HepG2 (cell line): ENCODE measurements at regions of chr5 and their contacts with region 1.

Region 1: GRCh38 chr5:134018154-134018985 is 13.6 kb upstream of the VDAC1 start:
- DNase-seq: peak; percentile 91
- ATAC-seq: peak; percentile 72
- H3K4me3 ChIP-seq: peak overlapping the region; percentile 24 to 60 (median 58)
- H3K27ac ChIP-seq: peak overlapping the region; percentile 93
- H3K4me1 ChIP-seq: peaks cover 60% of the 10 kb centered on the region
- H3K27me3 ChIP-seq: no peaks in the 10 kb centered on the region
- CTCF ChIP-seq: 0 out of 2 replicates have a peak, but pooled peaks have one; percentile 22
- EP300 ChIP-seq: peak; percentile 48 to 64; a peak in 2 of 4 replicates
- POLR2A ChIP-seq: peak in 1 of 2 experiments; percentile 67
- RAD21 ChIP-seq: no peak

Region 2: GRCh38 chr5:133968049-133968980 is 50.1 kb before region 1 on chr5 and contains the start of gene C5orf15:
- CTCF ChIA-PET with region 1: no interaction called
- POLR2A ChIA-PET with region 1: interaction called, 30 read pairs
- in situ Hi-C with region 1: no loop called
- intact Hi-C with region 1: no loop called
- DNase-seq: peak; percentile 95
- ATAC-seq: peak; percentile 94
- H3K4me3 ChIP-seq: peak within 1 kb of the TSS; percentile 80 to 98 (median 93)
- H3K27ac ChIP-seq: peak within 1 kb of the TSS; percentile 93
- H3K4me1 ChIP-seq: peaks cover 51% of the 10 kb centered on the region
- H3K27me3 ChIP-seq: no peaks in the 10 kb centered on the region; a peak in 1 of 5 replicates
- CTCF ChIP-seq: peak; percentile 36; the same call in 1 of the 2 replicates
- EP300 ChIP-seq: 0 out of 4 replicates have a peak, but pooled peaks of 1 of the 2 experiments have one; percentile 14
- POLR2A ChIP-seq: peak; percentile 89 to 93
- RAD21 ChIP-seq: peak; percentile 46; the same call in 1 of the 2 replicates
- total RNA-seq, gene C5orf15: 35.7 and 58.5 TPM in 2 replicates

Region 3: GRCh38 chr5:133996683-133997252 is 21.6 kb before region 1 on chr5:
- CTCF ChIA-PET with region 1: no interaction called
- POLR2A ChIA-PET with region 1: interaction called, 58 read pairs
- in situ Hi-C with region 1: no loop called
- intact Hi-C with region 1: no loop called
- DNase-seq: no peak
- ATAC-seq: peak; percentile 18
- H3K4me3 ChIP-seq: 0 out of 6 replicates have a peak overlapping the region, but pooled peaks of 1 of the 3 experiments have one; percentile 53
- H3K27ac ChIP-seq: peak overlapping the region; percentile 16
- H3K4me1 ChIP-seq: peaks cover 93% of the 10 kb centered on the region
- H3K27me3 ChIP-seq: no peaks in the 10 kb centered on the region
- CTCF ChIP-seq: peak; percentile 73
- EP300 ChIP-seq: no peak
- POLR2A ChIP-seq: no peak
- RAD21 ChIP-seq: no peak

Region 4: DNA sequence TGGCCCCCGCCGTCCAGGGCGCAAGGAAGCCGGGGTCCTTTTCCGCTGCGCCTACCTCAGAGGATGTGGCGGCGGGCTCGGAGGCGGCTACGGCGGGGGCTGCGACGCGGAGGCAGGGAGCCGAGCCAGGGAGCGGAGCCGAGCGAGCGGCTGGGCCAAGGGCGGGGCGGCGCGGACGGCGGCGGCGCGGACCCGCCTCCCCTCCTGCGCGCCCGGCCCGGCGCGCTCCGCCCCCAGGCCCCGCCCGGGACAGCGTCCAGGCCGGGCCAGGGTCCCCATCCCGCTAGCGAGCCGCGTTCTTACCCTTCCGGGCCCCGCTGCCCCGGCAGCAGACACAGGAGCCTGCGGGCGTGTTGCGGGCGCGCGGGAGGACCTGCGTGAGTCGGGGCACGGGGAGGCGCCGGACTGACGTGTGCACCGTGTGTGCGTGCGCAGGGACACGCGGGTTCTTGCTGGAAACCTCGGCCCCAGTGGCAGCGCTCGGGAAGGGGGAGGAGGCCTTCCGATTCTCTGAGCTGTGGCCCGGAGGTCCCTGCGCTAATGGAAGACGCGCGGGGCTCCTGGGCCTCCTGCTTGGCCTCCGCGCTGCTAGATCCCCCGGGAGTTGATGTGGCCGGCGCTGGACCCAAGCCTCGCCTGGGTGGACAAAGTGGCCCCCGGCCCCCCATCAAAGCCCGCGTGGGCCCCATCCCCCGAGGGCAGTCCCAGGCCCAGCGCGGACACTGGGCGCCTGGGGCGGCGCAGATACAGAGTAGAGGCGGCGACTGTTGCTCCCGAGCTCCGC is 13.6 kb before region 1 on chr5 and contains the start of gene VDAC1:
- CTCF ChIA-PET with region 1: no interaction called
- POLR2A ChIA-PET with region 1: interaction called, 192 read pairs
- in situ Hi-C with region 1: no loop called
- intact Hi-C with region 1: loop called (anchors 2 kb)
- DNase-seq: no peak
- ATAC-seq: peak; percentile 84
- H3K4me3 ChIP-seq: peak within 1 kb of the TSS; percentile 92 to 96 (median 96)
- H3K27ac ChIP-seq: peak within 1 kb of the TSS; percentile 95
- H3K4me1 ChIP-seq: peaks cover 51% of the 10 kb centered on the region
- H3K27me3 ChIP-seq: no peaks in the 10 kb centered on the region; a peak in 1 of 5 replicates
- CTCF ChIP-seq: peak; percentile 21; the same call in 1 of the 2 replicates
- EP300 ChIP-seq: no peak; a peak in 1 of 4 replicates
- POLR2A ChIP-seq: peak in 1 of 2 experiments; percentile 68; a peak in 1 of 4 replicates
- RAD21 ChIP-seq: no peak; the same call in 1 of the 2 replicates
- total RNA-seq, gene VDAC1: 380 and 481 TPM in 2 replicates

Region 5: GRCh38 chr5:134034326-134034725 is 16.0 kb after region 1 on chr5:
- CTCF ChIA-PET with region 1: interaction called, 4 read pairs
- POLR2A ChIA-PET with region 1: interaction called, 17 read pairs
- in situ Hi-C with region 1: no loop called
- intact Hi-C with region 1: no loop called
- DNase-seq: no peak
- ATAC-seq: no peak
- H3K4me3 ChIP-seq: no peak overlapping the region
- H3K27ac ChIP-seq: no peak overlapping the region
- H3K4me1 ChIP-seq: peaks cover 28% of the 10 kb centered on the region
- H3K27me3 ChIP-seq: no peaks in the 10 kb centered on the region
- CTCF ChIP-seq: no peak
- EP300 ChIP-seq: no peak
- POLR2A ChIP-seq: no peak
- RAD21 ChIP-seq: no peak

Region 6: DNA sequence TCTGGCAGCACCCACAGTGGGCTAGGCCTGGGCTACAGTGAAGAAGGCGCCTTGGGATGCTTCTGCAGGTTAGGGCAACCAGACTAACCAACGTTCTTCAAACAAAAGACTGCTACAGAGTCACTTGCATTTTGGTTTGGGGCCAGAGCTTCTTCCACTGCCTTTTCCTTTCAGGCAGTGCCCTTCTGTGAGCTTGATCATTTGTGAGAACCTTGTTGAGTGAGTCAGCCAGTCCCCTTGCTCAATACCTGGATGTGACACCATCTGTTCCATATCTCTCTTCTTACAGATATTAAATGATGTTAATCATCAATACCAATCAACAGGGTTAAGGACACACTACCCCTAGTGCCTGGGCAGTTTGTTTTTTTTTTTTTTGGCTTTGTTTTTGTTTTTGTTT is 32.9 kb after region 1 on chr5:
- CTCF ChIA-PET with region 1: no interaction called
- POLR2A ChIA-PET with region 1: interaction called, 10 read pairs
- in situ Hi-C with region 1: no loop called
- intact Hi-C with region 1: no loop called
- DNase-seq: no peak
- ATAC-seq: no peak
- H3K4me3 ChIP-seq: no peak overlapping the region
- H3K27ac ChIP-seq: no peak overlapping the region
- H3K4me1 ChIP-seq: peaks cover 59% of the 10 kb centered on the region
- H3K27me3 ChIP-seq: no peaks in the 10 kb centered on the region
- CTCF ChIP-seq: no peak
- EP300 ChIP-seq: no peak
- POLR2A ChIP-seq: no peak
- RAD21 ChIP-seq: no peak